Calu3 (cell line): ENCODE measurements at regions of chr14 and their contacts with region 1.

Region 1: GRCh38 chr14:30521899-30522736 is 36.8 kb upstream of the G2E3 start:
- DNase-seq: no peak
- H3K4me3 Mint-ChIP-seq: no peak overlapping the region
- H3K27ac Mint-ChIP-seq: no peak overlapping the region
- H3K4me1 Mint-ChIP-seq: no peaks in the 10 kb centered on the region
- H3K27me3 Mint-ChIP-seq: no peaks in the 10 kb centered on the region
- CTCF ChIP-seq: peak; percentile 19

Region 2: DNA sequence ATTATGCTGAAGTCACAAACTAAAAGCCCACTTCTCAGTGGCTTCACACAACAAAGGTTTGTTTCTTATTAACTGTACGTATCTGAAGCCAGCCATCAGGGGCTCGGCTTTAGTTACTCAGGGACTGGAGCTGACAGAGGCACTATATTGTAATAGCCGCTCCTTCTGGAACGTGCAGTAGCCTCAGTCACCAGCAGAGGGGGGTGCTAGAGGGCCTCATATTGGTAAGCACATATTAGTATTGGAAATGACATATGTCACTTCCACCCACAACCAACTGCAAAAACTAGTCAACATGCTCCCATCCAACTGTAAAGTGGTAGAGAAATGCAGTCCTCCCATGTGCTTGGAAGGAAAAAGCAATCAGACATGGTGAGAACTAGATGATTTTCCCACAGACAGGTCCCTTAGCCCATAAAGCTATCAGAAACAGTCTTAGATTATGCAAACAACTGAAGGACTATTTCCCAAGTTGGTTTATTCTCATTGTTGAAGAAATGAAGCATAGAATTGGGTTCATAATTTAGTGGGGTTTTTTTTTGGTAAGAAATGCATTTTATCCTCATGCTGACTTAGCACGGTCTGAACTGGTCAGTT is 146.7 kb before region 1 on chr14:
- CTCF ChIA-PET with region 1: interaction called, 7 read pairs
- intact Hi-C with region 1: loop called (anchors 1 kb)
- DNase-seq: peak; percentile 67
- H3K4me3 Mint-ChIP-seq: no peak overlapping the region
- H3K27ac Mint-ChIP-seq: no peak overlapping the region
- H3K4me1 Mint-ChIP-seq: no peaks in the 10 kb centered on the region
- H3K27me3 Mint-ChIP-seq: peaks cover 64% of the 10 kb centered on the region
- CTCF ChIP-seq: peak; percentile 62